Pancreas (tissue), 10 donors: ENCODE measurements at regions of chr6 and their contacts with region 1.

Region 1: DNA sequence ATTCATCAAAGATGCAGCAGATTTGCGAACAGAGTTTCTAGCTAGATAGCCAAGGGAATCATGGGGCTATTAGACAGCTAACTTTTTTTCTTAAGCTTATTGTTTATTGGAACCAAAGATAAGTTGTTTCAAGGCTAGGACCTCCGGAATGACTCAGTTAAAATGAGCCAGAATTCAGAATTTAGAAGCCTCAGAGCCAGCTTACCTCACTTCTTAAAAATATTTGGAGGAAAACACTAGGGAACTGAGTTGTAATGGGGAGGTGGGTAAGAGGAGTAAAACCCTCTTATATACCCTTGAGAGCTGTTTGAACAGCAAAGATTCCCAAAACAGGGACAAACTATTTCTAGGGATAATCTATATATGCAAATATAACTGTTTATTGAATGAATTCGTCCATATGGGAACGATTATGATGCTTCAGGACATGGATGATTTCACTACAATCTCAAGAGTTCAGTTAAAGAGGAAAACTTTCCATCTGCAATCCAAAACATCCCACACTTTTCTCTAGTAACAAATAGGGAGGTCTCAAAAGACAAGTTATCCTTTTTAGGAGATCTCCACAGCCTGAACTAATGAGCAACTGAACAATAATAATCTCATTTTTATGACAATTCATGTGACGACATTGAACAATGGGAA is 12.6 kb upstream of the CARMIL1 start:
- DNase-seq: no peak
- ATAC-seq: no peak
- H3K4me3 ChIP-seq: no peak overlapping the region
- H3K27ac ChIP-seq: no peak overlapping the region
- H3K4me1 ChIP-seq: no peaks in the 10 kb centered on the region
- H3K27me3 ChIP-seq: no peaks in the 10 kb centered on the region
- CTCF ChIP-seq: no peak

Region 2: GRCh38 chr6:25485821-25486534 is 219.4 kb after region 1 on chr6:
- intact Hi-C with region 1: loop called in 2 of 3 experiments (anchors 5 to 10 kb)
- DNase-seq: peak in 3 of 6 donors; percentile 17 to 62 (median 41)
- ATAC-seq: peak; percentile 28 to 49 (median 44)
- H3K4me3 ChIP-seq: no peak overlapping the region
- H3K27ac ChIP-seq: no peak overlapping the region
- H3K4me1 ChIP-seq: peaks cover 6 to 23% (median 8%) of the 10 kb centered on the region in 3 donors
- H3K27me3 ChIP-seq: no peaks in the 10 kb centered on the region
- CTCF ChIP-seq: no peak

Region 3: GRCh38 chr6:25601800-25602673 is 335.5 kb after region 1 on chr6:
- intact Hi-C with region 1: loop called in 1 of 3 experiments (anchors 5 kb)
- DNase-seq: no peak
- ATAC-seq: peak; percentile 63 to 80 (median 72)
- H3K4me3 ChIP-seq: no peak overlapping the region
- H3K27ac ChIP-seq: no peak overlapping the region
- H3K4me1 ChIP-seq: no peaks in the 10 kb centered on the region
- H3K27me3 ChIP-seq: no peaks in the 10 kb centered on the region
- CTCF ChIP-seq: peak in 3 of 4 donors; percentile 33 to 50 (median 36)

Region 4: GRCh38 chr6:25732468-25733198 is 466.1 kb after region 1 on chr6:
- intact Hi-C with region 1: no loop called
- DNase-seq: no peak
- ATAC-seq: no peak
- H3K4me3 ChIP-seq: no peak overlapping the region
- H3K27ac ChIP-seq: no peak overlapping the region
- H3K4me1 ChIP-seq: no peaks in the 10 kb centered on the region
- H3K27me3 ChIP-seq: no peaks in the 10 kb centered on the region
- CTCF ChIP-seq: no peak